ENCODE measurements at regions of chr1 and their contacts with region 1.

Region 1: GRCh38 chr1:221478050-221478949 is 263.6 kb downstream of the DUSP10 start:
- DNase-seq: peak; percentile 59
- ATAC-seq: peak; percentile 84
- H3K4me3 Mint-ChIP-seq: no peak overlapping the region
- H3K27ac Mint-ChIP-seq: no peak overlapping the region
- H3K4me1 Mint-ChIP-seq: no peaks in the 10 kb centered on the region
- H3K27me3 Mint-ChIP-seq: peaks cover 2% of the 10 kb centered on the region

Region 2: GRCh38 chr1:221263831-221264767 is 214.2 kb before region 1 on chr1:
- CTCF ChIA-PET with region 1: no interaction called
- POLR2A ChIA-PET with region 1: no interaction called
- DNase-seq: peak; percentile 58
- ATAC-seq: peak; percentile 67
- H3K4me3 Mint-ChIP-seq: no peak overlapping the region
- H3K27ac Mint-ChIP-seq: no peak overlapping the region
- H3K4me1 Mint-ChIP-seq: no peaks in the 10 kb centered on the region
- H3K27me3 Mint-ChIP-seq: no peaks in the 10 kb centered on the region

Region 3: GRCh38 chr1:222009105-222009730 is 530.9 kb after region 1 on chr1:
- CTCF ChIA-PET with region 1: interaction called, 24 read pairs
- POLR2A ChIA-PET with region 1: no interaction called
- DNase-seq: peak; percentile 64
- ATAC-seq: peak; percentile 81
- H3K4me3 Mint-ChIP-seq: no peak overlapping the region
- H3K27ac Mint-ChIP-seq: no peak overlapping the region
- H3K4me1 Mint-ChIP-seq: peaks cover 3% of the 10 kb centered on the region
- H3K27me3 Mint-ChIP-seq: peaks cover 12% of the 10 kb centered on the region

Region 4: DNA sequence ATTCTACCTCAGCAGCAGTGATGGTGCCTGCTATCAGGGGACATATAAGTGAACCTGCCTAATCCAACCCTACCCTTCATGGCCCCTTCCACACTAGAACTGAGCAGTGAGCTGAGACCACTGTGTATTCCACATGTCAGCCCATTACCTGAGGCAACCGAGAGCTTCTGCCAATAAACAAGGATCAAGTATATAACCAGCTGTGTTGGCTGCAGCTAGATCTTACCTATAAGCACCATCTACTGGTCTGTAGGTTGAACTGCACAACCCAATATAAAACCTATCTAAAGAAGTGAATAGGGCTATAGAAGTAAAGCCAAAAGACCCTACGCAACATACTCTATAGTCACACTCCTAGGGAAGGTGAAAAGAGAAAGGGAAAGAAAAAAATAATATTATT is 692.7 kb after region 1 on chr1:
- CTCF ChIA-PET with region 1: interaction called, 12 read pairs
- POLR2A ChIA-PET with region 1: no interaction called
- DNase-seq: no peak
- ATAC-seq: peak; percentile 49
- H3K4me3 Mint-ChIP-seq: no peak overlapping the region
- H3K27ac Mint-ChIP-seq: no peak overlapping the region
- H3K4me1 Mint-ChIP-seq: no peaks in the 10 kb centered on the region
- H3K27me3 Mint-ChIP-seq: no peaks in the 10 kb centered on the region